ENCODE measurements at regions of chr1 and their contacts with region 1.

Region 1: DNA sequence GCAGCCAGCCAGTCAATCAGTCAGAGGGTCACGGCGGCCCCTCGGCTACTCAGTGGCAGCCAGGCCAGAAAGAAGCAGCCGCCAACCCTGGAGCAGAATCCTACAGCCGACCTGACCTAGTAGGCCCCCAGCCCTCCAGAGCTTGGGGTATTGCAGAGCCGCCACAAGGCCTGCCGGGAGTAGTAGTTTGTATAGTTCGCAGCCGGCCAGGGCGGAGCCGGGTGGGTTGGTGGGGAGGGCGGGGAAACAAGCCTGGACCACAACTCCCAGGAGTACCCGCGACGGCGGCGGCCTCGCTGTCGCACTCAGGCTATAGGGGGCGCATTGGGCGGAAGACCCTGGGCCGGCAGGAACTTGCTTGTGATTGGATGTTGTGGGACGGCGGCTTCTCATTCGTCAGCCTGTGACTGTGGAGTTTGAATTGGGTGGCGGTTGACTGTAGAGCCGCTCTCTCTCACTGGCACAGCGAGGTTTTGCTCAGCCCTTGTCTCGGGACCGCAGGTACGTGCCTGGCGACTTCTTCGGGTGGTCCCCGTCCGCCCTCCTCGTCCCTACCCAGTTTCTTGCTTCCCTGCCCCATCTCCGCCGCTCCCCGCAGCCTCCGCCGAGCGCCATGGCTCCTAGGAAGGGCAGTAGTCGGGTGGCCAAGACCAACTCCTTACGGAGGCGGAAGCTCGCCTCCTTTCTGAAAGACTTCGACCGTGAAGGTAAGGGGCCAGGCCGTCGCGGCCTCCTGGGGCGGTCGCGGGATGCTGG is at the start of gene CDCA8:
- DNase-seq: peak; percentile 98 to 100 (median 99)

Region 2: DNA sequence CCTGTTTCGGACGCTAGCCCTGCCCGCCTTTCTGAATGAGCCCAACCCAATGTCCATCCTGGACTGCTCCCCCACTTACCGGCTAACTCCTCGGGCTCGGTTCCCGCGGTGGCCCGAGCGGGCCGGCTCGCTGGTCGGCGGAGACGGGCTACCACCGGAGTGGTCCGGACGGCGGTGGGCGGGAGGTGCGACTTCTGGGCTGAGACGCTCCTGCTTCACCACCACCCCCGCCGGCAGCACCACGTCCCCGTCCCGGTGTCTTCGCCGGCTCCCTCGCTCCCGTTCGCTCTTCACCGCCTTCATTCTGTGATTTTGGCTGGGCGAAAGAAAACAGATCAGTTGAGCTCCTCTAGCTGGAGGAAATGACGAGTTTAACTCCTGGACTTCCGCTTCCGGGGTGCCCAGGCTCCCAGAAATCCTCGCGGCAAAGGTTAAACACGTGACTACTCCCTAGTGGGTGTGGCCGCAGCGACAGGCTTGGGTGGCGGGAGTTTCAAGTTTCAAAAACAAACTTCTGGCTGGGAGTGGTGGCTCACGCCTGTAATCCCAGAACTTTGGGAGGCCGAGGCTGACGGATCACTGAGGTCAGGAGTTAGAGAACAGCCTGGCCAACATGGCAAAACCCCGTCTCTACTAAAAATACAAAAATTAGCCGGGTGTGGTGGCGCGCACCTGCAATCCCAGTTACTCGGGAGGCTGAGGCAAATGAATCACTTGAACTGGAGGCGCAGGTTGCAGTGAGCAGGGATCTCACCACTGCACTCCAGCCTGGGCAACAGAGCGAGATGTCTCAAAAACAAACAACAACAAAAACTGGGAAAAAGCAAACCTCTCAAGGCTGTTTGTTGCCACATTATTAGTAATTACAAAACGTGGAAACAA is 138.1 kb before region 1 on chr1 and contains the start of gene SNIP1:
- intact Hi-C with region 1: loop called (anchors 2 kb)
- DNase-seq: peak; percentile 93 to 100 (median 98)

Region 3: GRCh38 chr1:37807555-37808368 is 115.5 kb after region 1 on chr1 and contains the starts of genes C1orf122 and YRDC:
- intact Hi-C with region 1: loop called (anchors 5 kb)
- DNase-seq: peak; percentile 96 to 99 (median 96)

Region 4: GRCh38 chr1:37859507-37860345 is 167.5 kb after region 1 on chr1 and contains the start of gene MTF1:
- intact Hi-C with region 1: loop called (anchors 2 kb)
- DNase-seq: peak; percentile 93 to 99 (median 98)